ENCODE measurements at regions of chr3 and their contacts with region 1.

Region 1: GRCh38 chr3:107753480-107753879 is 230.7 kb downstream of the BBX start:
- DNase-seq: no peak
- CTCF ChIP-seq: peak; percentile 36

Region 2: DNA sequence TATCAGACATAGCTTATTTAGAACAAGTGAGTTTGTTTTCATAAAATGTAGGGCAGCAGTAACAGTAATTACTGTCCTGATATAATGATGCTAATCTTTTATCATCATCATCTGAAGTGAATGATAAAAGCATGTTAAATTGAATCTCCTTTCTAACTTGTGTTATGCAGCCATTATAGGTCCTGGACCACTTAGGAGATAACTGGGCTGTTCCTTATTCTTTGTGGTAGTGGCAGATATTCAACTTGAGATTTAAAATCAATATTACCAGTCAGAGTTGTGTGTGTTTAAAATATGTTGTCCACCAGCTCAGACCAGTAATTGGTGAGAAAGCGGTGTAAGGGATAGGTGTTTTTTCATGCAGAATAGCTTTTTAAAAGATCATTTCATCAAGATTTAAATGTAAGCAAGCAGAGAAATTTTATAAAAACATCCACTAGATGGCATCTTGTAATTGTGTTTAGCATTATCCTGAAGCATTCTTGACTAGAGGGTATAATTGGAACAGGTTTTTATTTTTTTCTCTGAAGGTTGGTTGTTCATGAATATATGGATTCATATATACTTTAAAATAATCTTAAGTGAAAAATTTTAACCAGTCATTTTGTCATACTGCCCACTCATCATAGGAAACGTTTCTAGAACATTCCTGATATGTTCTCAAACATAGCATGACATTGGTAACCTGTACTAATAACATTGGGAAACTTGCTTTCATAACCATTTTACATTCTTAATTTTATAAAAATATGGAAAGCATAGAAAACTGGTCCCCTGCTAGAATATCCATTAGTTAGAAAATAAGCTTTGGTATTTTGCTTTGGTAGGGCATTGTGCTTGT is 76.8 kb before region 1 on chr3:
- CTCF ChIA-PET with region 1: interaction called, 18 read pairs
- POLR2A ChIA-PET with region 1: no interaction called
- DNase-seq: no peak
- CTCF ChIP-seq: peak; percentile 24

Region 3: DNA sequence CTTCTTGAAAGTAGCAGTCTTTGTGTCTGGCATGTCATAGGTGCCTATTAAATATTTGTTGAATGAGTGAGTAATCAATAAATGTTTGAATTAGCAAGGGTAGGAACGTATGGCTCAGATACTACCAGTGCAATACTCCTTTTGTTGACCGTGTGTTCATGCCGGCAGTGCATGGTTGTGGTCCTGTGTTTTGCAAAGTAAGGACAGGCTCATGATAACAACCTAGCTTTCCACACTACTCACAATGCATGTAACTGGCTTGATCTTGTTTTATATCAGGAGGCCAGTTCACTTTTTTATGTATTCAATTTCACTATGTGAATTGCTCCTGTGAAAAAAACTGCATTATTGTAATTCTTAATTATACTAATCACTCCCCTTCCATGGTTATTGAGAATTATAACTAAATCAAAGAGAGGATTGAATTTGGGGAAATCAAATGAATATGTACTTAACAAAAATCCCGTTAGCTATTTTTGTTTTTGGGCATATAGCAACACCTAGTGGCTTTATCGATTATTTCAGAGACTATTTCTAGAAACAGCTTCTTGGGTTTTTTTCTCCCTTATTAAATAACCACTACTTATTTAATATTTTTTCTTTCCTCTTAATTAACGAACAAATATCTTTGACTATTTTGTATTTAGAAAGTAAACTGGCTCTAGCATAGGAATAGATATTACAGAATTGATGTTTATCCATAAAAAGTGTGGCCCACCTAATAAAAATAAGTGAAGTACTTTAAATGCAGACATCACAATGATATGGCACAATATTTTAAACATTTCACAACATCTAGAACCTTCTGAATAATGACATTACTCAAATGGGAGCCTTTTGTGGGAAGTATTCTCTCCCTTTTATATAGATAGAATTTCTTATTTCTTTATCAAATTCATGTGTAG is 12.2 kb before region 1 on chr3:
- CTCF ChIA-PET with region 1: interaction called, 24 read pairs
- POLR2A ChIA-PET with region 1: no interaction called
- DNase-seq: no peak
- CTCF ChIP-seq: peak; percentile 29

Region 4: DNA sequence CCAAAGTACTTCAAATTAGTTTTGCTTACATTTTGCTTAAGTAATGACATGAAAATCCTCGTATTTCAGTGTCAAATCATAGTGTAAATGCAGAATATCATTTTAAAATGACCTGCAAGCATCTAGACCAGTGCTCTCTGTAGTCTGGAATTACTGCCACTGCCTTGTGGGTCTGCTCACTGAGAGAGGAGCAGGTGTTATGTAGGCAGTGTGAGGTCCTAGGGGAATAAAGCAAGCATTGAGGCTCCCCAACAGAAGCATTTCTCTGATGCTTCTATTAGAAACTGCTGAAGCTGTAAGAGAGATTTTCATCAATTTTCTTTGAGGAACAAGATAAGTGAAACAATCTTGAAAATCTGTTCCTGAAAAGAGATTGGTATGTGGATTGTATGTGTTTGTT is 22.5 kb after region 1 on chr3:
- CTCF ChIA-PET with region 1: interaction called, 14 read pairs
- POLR2A ChIA-PET with region 1: no interaction called
- DNase-seq: no peak
- CTCF ChIP-seq: no peak

Measured in GM10248 (cell line).